ENCODE measurements at regions of chr10 and their contacts with region 1.

Region 1: DNA sequence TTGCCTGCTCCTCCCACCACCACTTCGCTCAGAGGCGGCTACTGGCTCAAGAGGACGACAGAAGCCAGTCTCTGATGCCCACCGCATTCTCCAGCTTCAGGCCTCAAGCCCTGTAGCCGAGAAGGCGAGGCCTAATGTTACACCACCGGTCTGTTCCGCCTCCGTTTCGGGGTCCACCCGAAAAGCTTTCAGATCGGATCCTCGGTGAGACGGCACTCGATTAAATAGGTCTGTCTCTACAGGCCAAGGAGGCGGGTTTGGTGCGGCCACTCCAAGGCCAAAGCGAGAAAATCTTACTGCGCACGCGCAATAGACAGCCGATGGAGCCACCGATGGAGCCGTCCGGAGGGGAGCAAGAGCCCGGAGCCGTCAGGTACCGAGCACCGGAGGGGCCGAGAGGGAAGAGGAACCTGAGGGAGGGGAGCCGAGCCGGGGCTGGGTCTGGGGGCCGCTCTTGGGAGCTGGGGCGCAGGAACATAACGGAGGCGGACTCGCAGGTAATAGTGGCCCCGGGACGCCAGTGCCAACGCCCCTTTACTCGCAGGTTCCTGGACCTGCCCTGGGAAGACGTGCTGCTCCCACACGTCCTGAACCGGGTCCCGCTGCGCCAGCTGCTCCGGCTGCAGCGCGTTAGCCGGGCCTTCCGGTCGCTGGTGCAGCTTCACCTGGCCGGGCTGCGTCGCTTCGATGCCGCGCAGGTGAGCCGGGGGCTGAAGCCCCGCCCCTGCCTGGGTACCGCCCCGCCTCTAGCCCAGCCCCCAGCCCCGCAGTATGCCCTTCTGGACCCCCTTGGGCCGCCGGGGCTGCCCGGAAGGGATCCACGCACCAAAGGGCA is at the start of gene FBXL15:
- DNase-seq: peak; percentile 95
- H3K4me3 Mint-ChIP-seq: peak within 1 kb of the TSS; percentile 93
- H3K27ac Mint-ChIP-seq: peak within 1 kb of the TSS; percentile 87
- H3K4me1 Mint-ChIP-seq: peaks cover 17% of the 10 kb centered on the region
- H3K27me3 Mint-ChIP-seq: peaks cover 18% of the 10 kb centered on the region
- total RNA-seq, gene FBXL15: 14.8 and 15.1 TPM in 2 replicates

Region 2: DNA sequence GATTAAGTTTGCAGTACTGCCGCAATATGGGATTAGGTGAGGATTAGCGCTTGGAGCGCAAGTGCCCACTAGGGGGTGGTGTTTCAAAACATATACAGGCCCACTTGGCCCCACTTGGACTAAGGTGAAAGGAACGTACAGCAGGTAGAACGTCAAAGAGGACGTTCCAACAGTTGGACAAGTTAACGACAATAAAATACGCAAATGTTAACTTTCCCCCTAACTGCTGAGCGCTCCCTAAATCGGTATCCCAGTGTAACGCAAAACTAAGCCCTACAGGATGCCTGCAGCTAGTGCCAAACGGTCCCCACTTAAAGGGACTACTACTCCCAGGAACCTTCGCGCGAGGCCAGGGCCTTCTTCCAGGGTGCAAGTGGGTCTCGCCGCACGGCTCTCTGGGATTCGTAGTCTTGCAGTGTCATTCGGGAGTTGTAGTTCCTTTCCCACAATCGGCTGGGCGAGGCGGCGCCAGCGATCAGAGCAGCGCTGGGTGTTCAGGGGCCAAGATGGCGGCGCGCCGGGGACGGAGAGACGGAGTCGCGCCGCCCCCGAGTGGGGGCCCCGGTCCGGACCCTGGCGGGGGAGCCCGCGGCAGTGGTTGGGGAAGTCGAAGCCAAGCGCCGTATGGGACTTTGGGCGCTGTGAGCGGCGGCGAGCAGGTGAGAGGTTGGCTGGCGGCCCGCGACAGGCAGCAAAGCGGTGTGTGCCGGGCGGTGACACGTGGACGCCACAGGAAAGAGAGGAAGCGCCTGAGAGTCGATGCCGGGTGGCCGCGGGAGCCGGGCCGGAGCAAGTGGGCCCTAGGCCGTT is 288.3 kb before region 1 on chr10 and contains the start of gene PPRC1:
- intact Hi-C with region 1: loop called (anchors 1 kb)
- DNase-seq: peak; percentile 98
- H3K4me3 Mint-ChIP-seq: peak within 1 kb of the TSS; percentile 95
- H3K27ac Mint-ChIP-seq: peak within 1 kb of the TSS; percentile 98
- H3K4me1 Mint-ChIP-seq: peaks cover 26% of the 10 kb centered on the region
- H3K27me3 Mint-ChIP-seq: no peaks in the 10 kb centered on the region
- total RNA-seq, gene PPRC1: 91.3 and 94.1 TPM in 2 replicates

Region 3: DNA sequence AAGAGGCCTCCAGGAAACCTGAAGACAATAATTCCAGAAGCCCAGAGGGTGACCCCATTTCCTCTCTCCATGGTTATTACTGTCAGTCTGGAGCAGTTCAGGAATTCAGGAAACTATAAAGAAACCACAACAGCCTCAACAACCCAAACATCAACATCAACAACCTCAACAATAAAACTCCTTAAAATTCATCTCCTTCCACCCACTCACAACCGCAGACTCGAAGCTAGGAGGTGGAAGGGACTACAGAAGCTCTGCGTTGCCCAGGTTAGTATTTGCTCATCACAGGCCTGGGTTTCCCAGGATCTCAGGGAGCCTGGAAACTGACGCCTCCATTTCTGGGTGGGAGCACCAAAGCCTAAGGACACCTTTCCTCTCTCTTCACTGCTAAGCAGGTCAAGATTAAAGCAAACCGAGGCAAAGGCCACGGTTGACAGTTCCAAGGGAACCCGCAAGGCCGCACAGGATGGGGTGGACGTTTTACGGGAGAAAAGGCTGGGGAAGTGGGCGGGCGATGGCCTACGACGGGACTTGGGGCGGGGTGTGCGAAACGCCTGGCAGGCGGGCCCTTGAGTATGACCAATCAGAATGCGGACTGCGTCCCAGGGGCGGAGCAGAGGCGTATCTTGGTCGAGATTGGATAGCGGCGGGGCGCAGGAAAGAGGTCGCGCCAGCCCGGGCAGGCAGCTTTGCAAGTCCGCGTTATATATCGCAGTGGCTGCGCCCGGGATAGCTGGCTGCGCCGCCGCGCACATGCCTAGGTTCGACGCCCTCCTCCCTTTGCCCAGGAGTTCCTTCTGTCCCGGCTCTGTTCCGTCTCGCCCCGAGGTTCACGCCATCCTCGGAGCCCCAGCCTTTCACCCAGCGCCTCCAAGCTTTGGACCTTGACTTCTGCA is 195.1 kb before region 1 on chr10 and contains the start of gene ELOVL3:
- intact Hi-C with region 1: loop called (anchors 2 kb)
- DNase-seq: peak; percentile 86
- H3K4me3 Mint-ChIP-seq: peak within 1 kb of the TSS; percentile 59
- H3K27ac Mint-ChIP-seq: no peak within 1 kb of the TSS
- H3K4me1 Mint-ChIP-seq: peaks cover 23% of the 10 kb centered on the region
- H3K27me3 Mint-ChIP-seq: peaks cover 47% of the 10 kb centered on the region
- total RNA-seq, gene ELOVL3: not detected in 2 replicates

Region 4: DNA sequence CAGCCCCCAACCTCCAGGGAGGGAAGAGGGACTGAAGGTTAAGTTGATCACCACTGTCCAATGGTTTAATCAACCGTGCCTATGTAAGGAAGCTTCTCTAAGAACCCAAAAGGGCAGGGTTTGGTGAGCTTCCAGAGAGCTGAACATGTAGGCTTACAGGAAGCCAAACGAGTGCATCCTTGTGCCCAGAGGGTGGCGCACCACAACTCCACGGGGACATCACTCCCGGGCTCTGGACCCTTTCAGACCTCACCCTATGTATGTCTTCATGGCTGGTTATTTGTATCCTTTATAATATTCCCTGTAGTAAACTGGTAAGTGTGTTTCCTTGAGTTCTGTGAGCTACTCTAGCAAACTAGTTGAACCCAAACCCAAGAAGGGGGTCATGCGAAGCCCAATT is 37.0 kb before region 1 on chr10:
- intact Hi-C with region 1: no loop called
- DNase-seq: no peak
- H3K4me3 Mint-ChIP-seq: no peak overlapping the region
- H3K27ac Mint-ChIP-seq: no peak overlapping the region
- H3K4me1 Mint-ChIP-seq: peaks cover 3% of the 10 kb centered on the region
- H3K27me3 Mint-ChIP-seq: no peaks in the 10 kb centered on the region

Region 5: DNA sequence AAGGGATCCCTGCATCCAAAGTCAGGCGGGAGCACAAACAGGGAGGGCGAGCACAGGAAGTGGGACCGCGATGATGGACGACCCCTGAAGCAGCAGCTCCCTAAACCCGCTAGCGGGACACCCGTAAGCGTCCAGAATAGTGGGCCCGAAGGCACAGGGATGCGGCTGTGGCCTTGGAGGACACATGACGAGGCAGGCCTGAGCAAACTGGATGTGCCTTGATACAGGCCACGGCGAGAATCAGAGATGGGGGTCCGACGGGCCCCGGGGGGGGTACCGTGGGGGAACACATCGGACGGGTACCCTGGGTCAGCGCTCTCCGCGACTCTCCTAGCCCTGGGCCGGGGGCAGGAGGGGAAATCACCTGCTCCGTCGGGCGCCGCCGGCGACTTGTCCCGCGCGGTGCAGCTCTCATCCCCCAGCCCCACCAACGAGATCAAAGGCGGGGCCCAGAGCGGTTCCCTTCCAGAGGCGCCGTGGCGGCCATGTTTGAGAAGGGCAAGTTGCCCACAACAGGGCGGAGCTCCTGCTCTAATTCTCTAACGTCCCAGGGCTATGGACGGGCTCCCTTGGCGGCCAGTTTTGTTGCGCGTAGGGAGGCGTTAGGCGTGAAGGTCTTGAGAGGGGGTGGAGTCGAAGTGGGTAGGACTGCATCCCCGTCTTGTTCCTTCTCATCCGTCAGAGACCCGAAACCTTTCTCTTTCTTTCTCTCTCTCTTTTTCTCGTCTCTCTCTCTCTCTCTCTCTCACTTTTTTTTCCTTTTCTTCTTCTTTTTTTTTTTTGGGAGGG is 11.3 kb after region 1 on chr10 and contains the start of gene CUEDC2:
- intact Hi-C with region 1: loop called (anchors 1 kb)
- DNase-seq: peak; percentile 96
- H3K4me3 Mint-ChIP-seq: peak within 1 kb of the TSS; percentile 92
- H3K27ac Mint-ChIP-seq: peak within 1 kb of the TSS; percentile 93
- H3K4me1 Mint-ChIP-seq: peaks cover 41% of the 10 kb centered on the region
- H3K27me3 Mint-ChIP-seq: no peaks in the 10 kb centered on the region
- total RNA-seq, gene CUEDC2: 60.7 and 67.5 TPM in 2 replicates

Region 6: DNA sequence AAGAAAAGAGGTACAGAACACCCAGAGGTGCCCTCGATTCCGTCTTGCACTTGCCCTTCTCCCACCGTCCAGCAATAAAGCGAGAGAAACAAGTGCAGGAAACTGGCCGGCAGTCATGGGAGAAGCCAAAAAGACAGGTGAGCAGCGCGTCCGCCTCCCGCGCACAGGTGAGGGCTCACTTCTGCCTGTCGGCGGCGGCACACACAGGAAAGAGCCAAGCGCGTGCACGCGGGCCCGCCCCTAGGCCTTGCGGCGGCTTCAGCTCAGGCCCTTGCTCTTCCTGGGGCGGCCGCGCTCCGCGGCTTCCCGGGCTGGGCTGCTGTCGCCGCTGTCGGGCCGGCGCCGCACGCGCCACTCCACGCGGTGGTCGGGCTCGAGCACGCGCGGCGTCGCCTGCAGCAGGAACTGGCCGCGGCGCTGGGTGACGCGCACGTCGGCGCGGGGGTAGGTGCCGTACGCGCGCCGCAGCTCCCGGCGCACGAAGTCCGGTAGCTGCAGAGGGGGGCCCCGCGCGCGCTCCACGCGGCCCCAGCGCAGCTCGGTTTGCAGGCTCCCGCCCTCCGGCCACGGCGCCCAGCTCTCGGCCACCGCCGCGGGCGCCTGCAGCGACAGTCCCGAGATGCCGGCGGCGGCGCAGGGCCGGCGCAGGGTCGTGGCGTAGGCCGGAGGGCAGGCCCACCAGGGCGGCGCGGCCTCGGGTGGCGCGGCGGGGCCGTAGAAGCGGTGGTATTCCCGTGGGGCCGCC is 29.3 kb after region 1 on chr10:
- intact Hi-C with region 1: loop called (anchors 1 kb)
- DNase-seq: peak; percentile 88
- H3K4me3 Mint-ChIP-seq: peak overlapping the region; percentile 94
- H3K27ac Mint-ChIP-seq: peak overlapping the region; percentile 87
- H3K4me1 Mint-ChIP-seq: peaks cover 23% of the 10 kb centered on the region
- H3K27me3 Mint-ChIP-seq: no peaks in the 10 kb centered on the region

Region 7: GRCh38 chr10:102461187-102462054 is 40.4 kb after region 1 on chr10:
- intact Hi-C with region 1: loop called (anchors 5 kb)
- DNase-seq: peak; percentile 88
- H3K4me3 Mint-ChIP-seq: peak overlapping the region; percentile 90
- H3K27ac Mint-ChIP-seq: peak overlapping the region; percentile 85
- H3K4me1 Mint-ChIP-seq: peaks cover 24% of the 10 kb centered on the region
- H3K27me3 Mint-ChIP-seq: no peaks in the 10 kb centered on the region

Region 8: DNA sequence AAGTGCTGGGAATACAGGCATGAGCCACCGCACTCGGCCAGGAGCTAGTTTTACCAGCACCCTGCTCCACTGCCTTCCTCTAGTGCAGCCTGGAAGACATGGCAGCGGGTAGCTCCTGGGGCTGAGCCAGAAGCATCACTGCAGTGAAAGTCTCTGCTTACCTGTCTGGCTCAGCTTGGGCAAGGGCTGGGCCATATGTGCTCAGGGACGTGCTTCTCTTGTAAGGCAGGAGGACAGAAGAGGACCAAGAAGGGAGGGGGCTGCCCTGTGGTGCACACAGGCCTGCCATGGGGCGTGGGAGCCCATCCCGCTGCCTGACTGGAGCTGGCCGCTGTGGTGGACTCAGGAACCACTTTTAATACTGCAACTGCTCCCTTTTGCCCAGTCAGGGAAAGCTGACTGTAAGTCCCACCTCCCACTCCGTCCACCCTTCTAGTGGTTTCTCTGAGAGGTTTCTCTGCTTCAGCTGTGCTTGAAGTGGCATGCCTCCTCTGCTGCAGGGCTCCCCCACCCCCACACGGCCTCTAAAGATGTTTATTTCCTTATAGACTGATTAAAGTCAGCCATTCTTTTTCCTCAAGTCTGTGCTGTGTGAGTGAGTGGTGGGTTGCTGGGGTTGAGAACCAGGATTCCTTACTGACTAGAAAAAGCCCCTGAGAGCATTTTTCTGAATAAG is 55.6 kb after region 1 on chr10:
- intact Hi-C with region 1: loop called (anchors 2 kb)
- DNase-seq: no peak
- H3K4me3 Mint-ChIP-seq: no peak overlapping the region
- H3K27ac Mint-ChIP-seq: no peak overlapping the region
- H3K4me1 Mint-ChIP-seq: peaks cover 12% of the 10 kb centered on the region
- H3K27me3 Mint-ChIP-seq: no peaks in the 10 kb centered on the region

Region 9: GRCh38 chr10:102660888-102661657 is 240.0 kb after region 1 on chr10:
- intact Hi-C with region 1: no loop called
- DNase-seq: peak; percentile 65
- H3K4me3 Mint-ChIP-seq: peak overlapping the region; percentile 63
- H3K27ac Mint-ChIP-seq: peak overlapping the region; percentile 90
- H3K4me1 Mint-ChIP-seq: peaks cover 28% of the 10 kb centered on the region
- H3K27me3 Mint-ChIP-seq: no peaks in the 10 kb centered on the region